Breast epithelium (tissue), 4 donors: ENCODE measurements at regions of chr6 and their contacts with region 1.

Region 1: GRCh38 chr6:121210943-121211342 is 123.3 kb downstream of the TBC1D32 start:
- DNase-seq: no peak
- H3K4me3 ChIP-seq: no peak overlapping the region
- H3K27ac ChIP-seq: no peak overlapping the region
- H3K4me1 ChIP-seq: no peaks in the 10 kb centered on the region
- H3K27me3 ChIP-seq: no peaks in the 10 kb centered on the region
- CTCF ChIP-seq: no peak
- POLR2A ChIP-seq: no peak

Region 2: GRCh38 chr6:122020588-122021264 is 809.8 kb after region 1 on chr6:
- intact Hi-C with region 1: loop called (anchors 5 kb)
- DNase-seq: no peak
- H3K4me3 ChIP-seq: no peak overlapping the region
- H3K27ac ChIP-seq: no peak overlapping the region
- H3K4me1 ChIP-seq: no peaks in the 10 kb centered on the region
- H3K27me3 ChIP-seq: no peaks in the 10 kb centered on the region
- CTCF ChIP-seq: no peak
- POLR2A ChIP-seq: no peak

Region 3: DNA sequence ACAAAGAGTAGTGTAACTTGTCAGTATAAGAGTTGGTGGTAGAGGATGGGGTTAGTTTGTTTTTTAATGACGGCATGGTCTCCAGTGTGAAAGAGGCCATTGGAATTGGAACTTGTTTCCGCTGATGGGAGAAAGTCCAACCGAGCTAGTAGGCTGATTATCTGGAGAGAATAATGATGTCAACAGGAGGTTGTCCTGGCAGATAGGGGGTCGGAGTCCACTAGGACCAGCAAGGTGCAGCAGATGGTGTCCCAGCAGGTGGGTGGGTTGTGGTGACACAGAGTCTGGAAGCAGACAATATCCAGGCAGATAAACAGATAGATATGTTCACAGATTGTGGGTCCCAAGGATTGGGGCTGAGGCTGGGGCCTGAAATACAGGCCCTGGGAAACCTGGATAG is 1434.3 kb after region 1 on chr6:
- intact Hi-C with region 1: no loop called
- DNase-seq: no peak
- H3K4me3 ChIP-seq: no peak overlapping the region
- H3K27ac ChIP-seq: no peak overlapping the region
- H3K4me1 ChIP-seq: no peaks in the 10 kb centered on the region
- H3K27me3 ChIP-seq: no peaks in the 10 kb centered on the region
- CTCF ChIP-seq: no peak
- POLR2A ChIP-seq: no peak